Motor neuron (in vitro differentiated cells): ENCODE measurements at regions of chr12 and their contacts with region 1.

Region 1: DNA sequence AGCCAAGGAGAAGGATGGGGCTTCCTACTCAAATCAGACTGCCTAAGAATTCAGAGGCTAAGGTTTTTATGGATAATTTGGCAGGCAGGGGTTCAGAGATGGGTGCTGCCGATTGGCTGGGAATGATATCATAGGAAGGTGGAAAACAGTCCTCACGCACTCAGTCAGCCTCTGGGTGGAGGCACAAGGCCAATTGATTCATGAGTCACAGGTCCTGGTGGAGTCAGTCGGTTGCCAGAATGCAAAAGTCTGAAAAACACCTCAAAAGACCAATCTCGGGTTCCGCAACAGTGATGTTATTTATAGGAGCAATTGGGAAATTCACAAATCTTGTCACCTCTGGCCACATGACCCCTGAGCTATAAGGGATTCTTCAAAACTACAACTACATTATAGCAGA is 105.5 kb downstream of the GXYLT1 start:
- ATAC-seq: peak in 2 of 8 experiments; percentile 99
- H3K4me3 ChIP-seq: no peak overlapping the region
- H3K27ac ChIP-seq: no peak overlapping the region
- H3K4me1 ChIP-seq: no peaks in the 10 kb centered on the region

Region 2: DNA sequence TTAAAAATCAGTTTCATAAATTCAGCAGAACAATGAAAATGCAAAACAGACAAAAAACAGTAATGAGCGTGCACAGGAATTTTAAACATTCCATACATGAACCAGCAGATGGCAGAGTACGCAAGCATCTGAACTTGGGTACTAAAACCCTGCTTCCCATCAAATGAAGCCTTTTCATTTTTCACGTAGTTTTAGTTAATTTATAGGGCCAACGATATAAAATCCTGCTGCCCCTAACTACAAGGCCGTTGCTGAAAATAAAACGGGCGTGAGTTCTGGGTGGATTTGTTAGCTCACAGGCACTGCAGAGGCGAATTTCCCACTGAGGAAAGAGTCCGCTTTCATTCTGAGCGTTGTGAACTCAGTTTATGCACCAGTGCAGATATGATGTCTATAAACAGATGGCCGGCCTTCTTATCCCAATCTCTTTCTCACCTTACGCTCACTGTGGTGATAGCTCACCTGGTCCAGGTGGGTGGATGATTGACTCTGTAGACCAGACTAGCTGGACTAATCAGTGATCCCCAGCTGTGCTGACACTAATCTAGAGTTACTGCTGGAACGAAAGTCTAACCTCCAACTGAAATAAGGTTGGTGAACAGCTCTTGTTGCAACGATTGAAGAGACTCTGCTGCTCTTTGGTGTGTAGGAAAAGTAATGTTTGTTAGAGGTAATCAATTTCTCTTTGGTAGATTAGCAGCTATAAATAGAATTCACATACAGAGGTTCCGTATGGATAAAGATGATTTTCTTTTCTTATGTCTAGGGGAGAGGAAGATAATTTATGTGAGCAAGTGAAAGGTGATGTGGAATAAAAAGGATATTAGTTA is 761.8 kb before region 1 on chr12:
- in situ Hi-C with region 1: loop called in 1 of 9 experiments (anchors 25 kb)
- ATAC-seq: peak; percentile 20 to 65 (median 54)
- H3K4me3 ChIP-seq: no peak overlapping the region
- H3K27ac ChIP-seq: peak overlapping the region in 1 of 2 donors; percentile 33
- H3K4me1 ChIP-seq: peaks cover 12 to 24% of the 10 kb centered on the region in 2 donors

Region 3: GRCh38 chr12:41684997-41685396 is 354.2 kb before region 1 on chr12:
- in situ Hi-C with region 1: no loop called
- ATAC-seq: no peak
- H3K4me3 ChIP-seq: no peak overlapping the region
- H3K27ac ChIP-seq: no peak overlapping the region
- H3K4me1 ChIP-seq: peaks cover 0 to 10% of the 10 kb centered on the region in 2 donors